Psoas muscle (tissue), 8 donors: ENCODE measurements at regions of chr6 and their contacts with region 1.

Region 1: GRCh38 chr6:138044458-138044857 is 62.8 kb downstream of the PERP start:
- DNase-seq: no peak
- ATAC-seq: no peak
- H3K4me3 ChIP-seq: no peak overlapping the region
- H3K27ac ChIP-seq: no peak overlapping the region
- H3K4me1 ChIP-seq: no peaks in the 10 kb centered on the region
- H3K27me3 ChIP-seq: no peaks in the 10 kb centered on the region
- CTCF ChIP-seq: no peak

Region 2: DNA sequence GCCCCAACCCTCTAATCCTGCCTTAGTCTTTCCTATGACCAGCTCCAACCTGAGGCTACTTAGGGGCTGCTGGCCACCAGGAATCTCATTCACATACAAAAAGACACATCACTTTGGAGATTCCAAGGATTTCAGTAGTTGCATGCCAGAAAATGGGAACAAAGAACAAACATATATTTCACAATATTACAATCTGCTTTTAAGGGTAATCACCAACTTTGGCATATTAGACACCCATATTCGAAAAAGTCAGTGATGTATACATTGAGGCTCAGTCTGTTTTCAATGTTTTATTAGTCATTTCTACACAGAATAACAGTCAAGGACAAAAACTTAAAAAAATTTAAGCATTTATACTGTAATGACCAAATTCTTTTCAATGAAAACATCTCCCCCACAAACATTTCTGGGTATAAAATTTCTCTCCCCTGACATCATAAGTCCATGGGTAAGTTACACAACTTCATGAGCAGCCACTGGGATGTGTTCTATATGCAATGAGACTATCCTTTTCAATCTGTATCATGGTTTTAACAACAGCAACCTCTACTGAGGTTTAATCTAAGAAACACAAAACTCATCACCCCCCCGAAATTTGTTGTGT is 1597.8 kb before region 1 on chr6:
- intact Hi-C with region 1: loop called in 1 of 2 experiments (anchors 5 kb)
- DNase-seq: no peak
- ATAC-seq: no peak
- H3K4me3 ChIP-seq: no peak overlapping the region
- H3K27ac ChIP-seq: no peak overlapping the region
- H3K4me1 ChIP-seq: no peaks in the 10 kb centered on the region
- H3K27me3 ChIP-seq: no peaks in the 10 kb centered on the region
- CTCF ChIP-seq: no peak

Region 3: DNA sequence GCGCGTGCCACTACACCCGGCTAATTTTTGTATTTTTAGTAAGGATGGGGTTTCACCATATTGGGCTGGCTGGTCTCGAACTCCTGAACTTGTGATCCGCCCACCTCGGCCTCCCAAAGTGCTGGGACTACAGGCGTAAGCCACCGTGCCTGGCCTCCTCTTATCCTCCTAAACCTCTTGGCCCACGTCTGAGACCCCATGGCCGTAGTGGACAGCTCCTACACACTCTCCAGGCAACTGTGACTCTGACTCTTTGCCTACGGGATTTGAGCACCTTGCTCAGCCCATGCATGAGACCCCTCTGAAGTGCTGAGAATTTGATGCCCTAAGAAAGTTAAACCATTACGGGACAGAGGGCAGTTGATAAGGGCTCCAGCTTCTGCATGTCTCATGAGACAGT is 37.8 kb after region 1 on chr6:
- intact Hi-C with region 1: no loop called
- DNase-seq: no peak
- ATAC-seq: no peak
- H3K4me3 ChIP-seq: no peak overlapping the region
- H3K27ac ChIP-seq: no peak overlapping the region
- H3K4me1 ChIP-seq: no peaks in the 10 kb centered on the region
- H3K27me3 ChIP-seq: no peaks in the 10 kb centered on the region
- CTCF ChIP-seq: no peak

Region 4: GRCh38 chr6:138194287-138194686 is 149.8 kb after region 1 on chr6:
- intact Hi-C with region 1: no loop called
- DNase-seq: no peak
- ATAC-seq: no peak
- H3K4me3 ChIP-seq: no peak overlapping the region
- H3K27ac ChIP-seq: no peak overlapping the region
- H3K4me1 ChIP-seq: no peaks in the 10 kb centered on the region
- H3K27me3 ChIP-seq: no peaks in the 10 kb centered on the region
- CTCF ChIP-seq: no peak